PC-3 (cell line): ENCODE measurements at regions of chr4 and their contacts with region 1.

Region 1: GRCh38 chr4:142474335-142475087 is 371.6 kb downstream of the INPP4B start:
- DNase-seq: peak; percentile 98
- ATAC-seq: peak; percentile 86
- H3K4me3 ChIP-seq: peak overlapping the region; percentile 63
- H3K27ac ChIP-seq: peak overlapping the region; percentile 99
- H3K4me1 ChIP-seq: peaks cover 50% of the 10 kb centered on the region
- H3K27me3 ChIP-seq: no peaks in the 10 kb centered on the region
- CTCF ChIP-seq: no peak

Region 2: GRCh38 chr4:142036795-142037583 is 437.5 kb before region 1 on chr4:
- CTCF ChIA-PET with region 1: no interaction called
- POLR2A ChIA-PET with region 1: interaction called, 11 read pairs
- intact Hi-C with region 1: no loop called
- DNase-seq: peak; percentile 88
- ATAC-seq: peak; percentile 81
- H3K4me3 ChIP-seq: peak overlapping the region; percentile 14; the same call in 1 of the 2 replicates
- H3K27ac ChIP-seq: peak overlapping the region; percentile 60
- H3K4me1 ChIP-seq: peaks cover 25% of the 10 kb centered on the region
- H3K27me3 ChIP-seq: no peaks in the 10 kb centered on the region
- CTCF ChIP-seq: no peak

Region 3: DNA sequence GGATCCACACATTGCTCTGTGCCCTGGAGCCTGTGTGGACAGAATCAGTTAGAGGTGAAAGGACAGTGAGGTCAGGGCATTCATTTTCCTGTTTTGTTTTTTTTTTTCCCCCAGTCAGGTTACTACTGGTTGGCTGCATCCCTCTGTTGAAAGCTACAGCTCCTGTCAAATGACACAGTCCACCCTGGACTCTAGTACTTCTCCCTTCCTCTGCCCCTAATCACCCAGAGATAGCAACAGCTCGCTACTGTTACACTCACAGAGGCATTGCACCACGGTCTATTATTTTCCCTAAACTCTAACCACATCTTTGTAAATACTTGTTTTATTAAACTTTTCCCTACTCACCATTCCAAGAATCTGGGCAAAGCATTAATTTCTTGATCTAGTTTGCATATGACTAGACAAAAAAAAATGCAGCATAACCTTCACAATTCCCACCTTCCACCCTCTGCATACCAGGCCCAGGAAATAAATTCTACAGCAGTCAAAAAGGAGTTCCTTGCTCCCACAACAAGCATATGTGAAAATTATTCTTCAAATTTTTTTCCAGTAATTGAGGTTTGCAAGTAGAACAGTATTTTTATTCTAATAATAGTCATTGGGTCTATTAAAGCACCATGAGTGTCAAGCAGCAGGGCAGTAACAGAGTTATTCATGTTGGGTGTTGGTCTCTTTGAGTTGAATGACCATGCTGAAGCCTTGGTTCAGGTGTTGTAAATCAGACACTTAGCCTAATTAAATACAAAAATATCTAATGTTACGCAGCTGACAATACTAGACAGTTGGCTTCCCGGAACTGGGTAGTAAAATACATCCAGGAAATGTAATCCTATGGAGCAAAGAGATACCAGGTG is 42.4 kb after region 1 on chr4:
- CTCF ChIA-PET with region 1: no interaction called
- POLR2A ChIA-PET with region 1: no interaction called
- intact Hi-C with region 1: loop called (anchors 5 kb)
- DNase-seq: peak; percentile 76
- ATAC-seq: peak; percentile 45
- H3K4me3 ChIP-seq: no peak overlapping the region
- H3K27ac ChIP-seq: peak overlapping the region; percentile 16
- H3K4me1 ChIP-seq: peaks cover 47% of the 10 kb centered on the region
- H3K27me3 ChIP-seq: no peaks in the 10 kb centered on the region
- CTCF ChIP-seq: no peak

Region 4: GRCh38 chr4:142549726-142550463 is 75.4 kb after region 1 on chr4:
- CTCF ChIA-PET with region 1: interaction called, 3 read pairs
- POLR2A ChIA-PET with region 1: interaction called, 4 read pairs
- intact Hi-C with region 1: loop called (anchors 1 kb)
- DNase-seq: peak; percentile 96
- ATAC-seq: peak; percentile 92
- H3K4me3 ChIP-seq: peak overlapping the region; percentile 1; the same call in 1 of the 2 replicates
- H3K27ac ChIP-seq: peak overlapping the region; percentile 93
- H3K4me1 ChIP-seq: peaks cover 36% of the 10 kb centered on the region
- H3K27me3 ChIP-seq: no peaks in the 10 kb centered on the region
- CTCF ChIP-seq: peak; percentile 20; the same call in 1 of the 2 replicates

Region 5: GRCh38 chr4:142812091-142812490 is 337.6 kb after region 1 on chr4:
- CTCF ChIA-PET with region 1: no interaction called
- POLR2A ChIA-PET with region 1: no interaction called
- intact Hi-C with region 1: no loop called
- DNase-seq: no peak
- ATAC-seq: no peak
- H3K4me3 ChIP-seq: no peak overlapping the region
- H3K27ac ChIP-seq: no peak overlapping the region
- H3K4me1 ChIP-seq: peaks cover 15% of the 10 kb centered on the region
- H3K27me3 ChIP-seq: no peaks in the 10 kb centered on the region
- CTCF ChIP-seq: no peak